ENCODE measurements at regions of chr14 and their contacts with region 1.

Region 1: DNA sequence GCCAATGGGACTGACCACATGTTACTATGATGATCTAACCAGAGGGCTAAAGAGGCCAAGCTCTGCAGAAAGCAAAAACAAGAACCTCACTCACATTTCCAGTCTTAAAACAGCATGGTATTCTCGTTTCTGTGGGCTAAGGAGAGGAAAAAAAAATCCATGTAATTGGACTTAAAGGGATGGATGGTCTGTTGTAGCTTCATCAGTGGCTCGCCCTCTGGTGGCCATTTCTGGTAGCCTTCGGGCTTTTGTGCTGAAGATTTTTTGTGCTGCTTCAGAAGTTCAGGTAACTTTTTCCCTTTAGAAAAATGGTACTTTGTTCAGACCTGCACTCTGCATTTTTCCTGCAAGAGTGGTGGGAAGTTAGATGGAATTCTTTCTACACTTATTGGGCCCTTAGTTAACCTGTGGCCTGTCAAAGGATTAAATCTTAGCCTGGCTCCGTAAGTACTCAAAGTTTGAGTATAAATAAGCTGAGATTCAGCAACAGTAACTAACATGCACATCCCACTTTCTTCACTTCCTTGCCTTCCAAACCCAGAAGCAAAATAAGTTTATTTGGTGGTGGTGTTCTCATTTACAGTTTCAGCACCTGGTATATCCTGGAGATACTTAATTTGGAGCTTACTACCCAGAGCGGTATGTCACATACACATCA is 22.3 kb downstream of the DCAF4 start:
- DNase-seq: peak; percentile 77
- ATAC-seq: peak; percentile 41
- H3K4me3 Mint-ChIP-seq: no peak overlapping the region
- H3K27ac Mint-ChIP-seq: peak overlapping the region; percentile 52
- H3K4me1 Mint-ChIP-seq: peaks cover 21% of the 10 kb centered on the region
- H3K27me3 Mint-ChIP-seq: no peaks in the 10 kb centered on the region

Region 2: DNA sequence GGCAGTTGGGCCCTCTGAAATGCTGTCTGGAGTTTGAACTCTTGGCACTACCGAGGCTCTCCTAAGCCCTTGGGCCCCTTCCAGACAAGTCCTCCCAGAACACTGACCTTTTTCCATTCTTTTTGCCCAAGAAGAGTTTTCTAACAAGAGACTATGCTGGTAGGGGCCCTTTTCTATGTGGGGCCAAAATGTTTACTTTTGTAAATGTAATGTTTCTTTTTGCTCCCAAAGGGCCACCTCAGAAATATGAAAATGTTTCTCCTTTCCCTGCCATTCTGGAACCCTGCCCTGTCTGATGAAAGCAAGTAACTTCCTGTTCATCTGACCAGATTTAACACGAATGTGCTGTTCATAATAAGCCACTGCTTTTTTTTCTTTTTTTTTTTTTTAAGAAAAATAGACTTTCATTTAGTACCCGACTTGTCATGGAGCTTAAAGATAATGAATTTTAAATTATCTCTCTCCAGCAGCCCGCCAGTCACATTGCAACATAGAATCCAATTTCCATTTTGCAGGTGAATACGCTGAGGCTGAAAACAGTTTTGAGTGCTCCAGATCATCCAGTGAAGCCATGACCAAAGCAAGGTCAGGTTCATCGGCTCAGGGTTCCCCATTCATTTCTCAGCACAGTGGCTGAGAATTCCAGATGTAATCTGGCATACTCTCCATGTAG is 224.6 kb before region 1 on chr14:
- CTCF ChIA-PET with region 1: no interaction called
- DNase-seq: no peak
- ATAC-seq: no peak
- H3K4me3 Mint-ChIP-seq: no peak overlapping the region
- H3K27ac Mint-ChIP-seq: no peak overlapping the region
- H3K4me1 Mint-ChIP-seq: peaks cover 10% of the 10 kb centered on the region
- H3K27me3 Mint-ChIP-seq: no peaks in the 10 kb centered on the region

Region 3: GRCh38 chr14:72926292-72927028 is 22.1 kb before region 1 on chr14 and contains the start of gene DCAF4:
- CTCF ChIA-PET with region 1: interaction called, 18 read pairs
- DNase-seq: peak; percentile 99
- ATAC-seq: peak; percentile 96
- H3K4me3 Mint-ChIP-seq: peak within 1 kb of the TSS; percentile 91
- H3K27ac Mint-ChIP-seq: peak within 1 kb of the TSS; percentile 94
- H3K4me1 Mint-ChIP-seq: peaks cover 11% of the 10 kb centered on the region
- H3K27me3 Mint-ChIP-seq: peaks cover 18% of the 10 kb centered on the region
- total RNA-seq, gene DCAF4: 17.3 to 23.1 TPM

Measured in activated CD8-positive, alpha-beta memory T cell treated with anti-CD3 and anti-CD28 coated beads, Interleukin-2, amount 10 ng/mL, durations not matched to agents 7 days and 5 days (primary cell).